CD8-positive, alpha-beta T cell (primary cell): ENCODE measurements at regions of chr20 and their contacts with region 1.

Region 1: DNA sequence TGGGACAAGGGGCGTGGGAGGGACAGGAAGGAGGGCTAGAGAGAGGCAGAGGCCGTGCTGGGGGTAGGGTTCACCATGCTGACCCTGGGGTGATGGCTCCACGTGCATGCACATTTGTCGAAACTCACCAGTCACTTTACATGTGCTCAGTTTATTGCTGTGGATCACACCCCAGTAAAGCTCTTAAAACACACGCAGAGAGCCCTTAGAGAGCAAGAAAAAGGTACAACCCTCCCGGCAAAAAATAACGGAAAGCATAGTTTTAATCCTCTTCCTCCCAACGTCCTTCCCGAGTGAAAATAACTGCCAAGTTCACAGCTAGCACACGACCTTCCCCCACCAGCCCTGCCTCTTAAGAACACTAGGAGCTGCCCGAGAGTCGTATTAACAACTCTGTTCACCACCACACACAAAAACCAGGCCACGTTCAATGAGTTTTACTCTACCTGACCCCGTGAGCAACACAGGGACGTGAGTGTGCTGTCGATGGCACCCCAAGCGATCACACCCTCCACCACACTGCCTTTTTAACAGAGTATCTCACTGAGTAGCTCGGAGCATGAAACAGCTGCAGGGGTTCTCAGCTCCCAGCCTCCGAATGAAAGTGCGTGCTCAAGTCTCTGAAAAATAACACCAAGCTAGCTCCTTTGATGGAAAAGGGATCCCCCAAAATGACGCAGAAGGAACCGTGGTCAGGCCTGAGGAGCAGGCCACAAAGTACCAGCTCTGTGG is 39.7 kb downstream of the TAF4 start:
- DNase-seq: peak in 7 of 9 experiments; percentile 4 to 64 (median 27)
- ATAC-seq: peak; percentile 85
- H3K4me3 ChIP-seq: no peak overlapping the region
- H3K4me3 Mint-ChIP-seq: peak overlapping the region; percentile 12
- H3K27ac ChIP-seq: no peak overlapping the region
- H3K27ac Mint-ChIP-seq: peak overlapping the region; percentile 58
- H3K4me1 ChIP-seq: peaks cover 20% of the 10 kb centered on the region
- H3K4me1 Mint-ChIP-seq: peaks cover 54% of the 10 kb centered on the region
- H3K27me3 ChIP-seq: no peaks in the 10 kb centered on the region
- H3K27me3 Mint-ChIP-seq: no peaks in the 10 kb centered on the region
- CTCF ChIP-seq: peak; percentile 48

Region 2: DNA sequence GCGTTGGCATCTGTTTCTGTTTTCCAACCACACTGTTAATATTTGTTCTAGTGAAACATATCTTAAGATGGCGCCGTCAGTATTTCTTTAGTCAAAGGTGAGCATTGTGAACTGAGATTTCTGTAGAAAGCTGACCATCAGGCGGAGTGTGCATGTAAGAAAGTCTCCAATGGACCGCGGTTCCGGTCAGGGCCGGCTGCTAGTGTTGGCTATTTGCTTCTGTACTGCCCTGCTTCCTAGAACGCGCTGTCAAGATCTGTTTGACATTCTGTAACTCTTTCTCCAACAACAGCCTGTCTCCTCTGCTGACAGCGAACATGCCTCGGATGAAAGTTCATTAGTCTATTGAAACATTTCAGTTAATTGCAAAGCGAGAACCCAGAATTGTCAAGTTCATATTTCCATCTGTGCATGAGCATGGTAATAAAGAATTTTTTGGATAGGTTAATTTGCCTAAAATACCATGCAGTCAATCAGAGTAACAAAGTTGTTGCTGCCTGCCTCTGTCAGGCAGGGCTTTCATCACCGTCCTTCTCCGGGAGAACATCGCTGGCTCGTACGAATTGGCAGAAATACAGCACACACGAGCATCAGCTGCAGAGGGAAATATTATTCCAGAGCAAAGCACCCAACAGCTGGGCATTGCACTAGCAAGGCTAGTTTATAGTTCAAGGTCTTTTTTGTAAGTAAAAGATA is 404.8 kb before region 1 on chr20:
- CTCF ChIA-PET with region 1: no interaction called
- POLR2A ChIA-PET with region 1: no interaction called
- intact Hi-C with region 1: no loop called
- DNase-seq: no peak
- ATAC-seq: no peak
- H3K4me3 ChIP-seq: no peak overlapping the region
- H3K4me3 Mint-ChIP-seq: no peak overlapping the region
- H3K27ac ChIP-seq: no peak overlapping the region
- H3K27ac Mint-ChIP-seq: no peak overlapping the region
- H3K4me1 ChIP-seq: no peaks in the 10 kb centered on the region
- H3K4me1 Mint-ChIP-seq: no peaks in the 10 kb centered on the region
- H3K27me3 ChIP-seq: no peaks in the 10 kb centered on the region
- H3K27me3 Mint-ChIP-seq: no peaks in the 10 kb centered on the region
- CTCF ChIP-seq: no peak

Region 3: GRCh38 chr20:62065669-62066338 is 39.8 kb after region 1 on chr20 and contains the start of gene TAF4:
- CTCF ChIA-PET with region 1: interaction called, 4 read pairs
- POLR2A ChIA-PET with region 1: interaction called, 5 read pairs
- intact Hi-C with region 1: loop called (anchors 5 kb)
- DNase-seq: peak; percentile 69 to 92 (median 79)
- ATAC-seq: peak; percentile 77
- H3K4me3 ChIP-seq: peak within 1 kb of the TSS; percentile 54 to 70
- H3K4me3 Mint-ChIP-seq: peak within 1 kb of the TSS; percentile 90
- H3K27ac ChIP-seq: peak within 1 kb of the TSS; percentile 47 to 74
- H3K27ac Mint-ChIP-seq: peak within 1 kb of the TSS; percentile 95
- H3K4me1 ChIP-seq: peaks cover 42% of the 10 kb centered on the region
- H3K4me1 Mint-ChIP-seq: peaks cover 52% of the 10 kb centered on the region
- H3K27me3 ChIP-seq: no peaks in the 10 kb centered on the region
- H3K27me3 Mint-ChIP-seq: no peaks in the 10 kb centered on the region
- CTCF ChIP-seq: no peak
- total RNA-seq, gene TAF4: 9.8 to 14.1 TPM

Region 4: DNA sequence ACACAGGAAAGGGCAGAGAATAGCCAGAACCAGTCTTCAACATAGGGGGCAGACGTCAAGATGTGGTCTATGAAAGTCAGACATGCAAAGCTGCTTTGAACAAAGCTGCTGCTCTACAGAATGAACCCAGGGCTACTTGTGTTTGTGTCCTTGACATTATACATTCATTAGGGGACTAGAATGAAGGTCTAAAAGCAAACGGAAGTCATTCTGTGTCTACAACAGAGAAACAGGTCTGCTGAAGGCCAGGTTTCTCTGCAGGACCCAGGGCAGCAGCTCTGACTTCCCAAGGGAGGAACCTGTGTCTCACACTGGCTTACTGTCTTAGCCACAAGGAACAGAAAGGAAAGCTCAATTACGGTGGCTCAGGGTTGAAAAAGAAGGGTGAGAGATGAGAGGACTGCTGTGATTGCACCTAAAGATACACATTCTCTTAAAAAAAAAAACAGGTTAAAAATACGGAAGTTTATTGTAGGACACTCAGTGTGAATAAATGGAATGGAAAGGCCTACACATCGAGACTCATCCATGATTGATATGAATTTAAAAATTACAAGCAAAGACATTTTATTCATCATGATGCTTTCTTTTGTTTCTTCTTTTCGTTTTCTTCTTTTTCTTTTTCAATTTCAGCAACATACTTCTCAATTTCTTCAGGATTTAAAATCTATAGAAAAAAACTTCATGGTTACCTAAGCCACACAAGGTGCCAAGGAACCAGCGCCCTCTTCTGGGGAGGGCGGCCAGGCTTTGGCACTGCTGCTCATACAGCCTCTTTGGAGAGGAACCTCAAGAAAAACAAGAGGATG is 110.5 kb after region 1 on chr20:
- CTCF ChIA-PET with region 1: interaction called, 21 read pairs
- POLR2A ChIA-PET with region 1: no interaction called
- intact Hi-C with region 1: loop called (anchors 1 kb)
- DNase-seq: peak; percentile 59 to 86 (median 78)
- ATAC-seq: peak; percentile 61
- H3K4me3 ChIP-seq: no peak overlapping the region
- H3K4me3 Mint-ChIP-seq: no peak overlapping the region
- H3K27ac ChIP-seq: no peak overlapping the region
- H3K27ac Mint-ChIP-seq: peak overlapping the region; percentile 90
- H3K4me1 ChIP-seq: peaks cover 21% of the 10 kb centered on the region
- H3K4me1 Mint-ChIP-seq: peaks cover 42% of the 10 kb centered on the region
- H3K27me3 ChIP-seq: no peaks in the 10 kb centered on the region
- H3K27me3 Mint-ChIP-seq: no peaks in the 10 kb centered on the region
- CTCF ChIP-seq: peak; percentile 80

Region 5: DNA sequence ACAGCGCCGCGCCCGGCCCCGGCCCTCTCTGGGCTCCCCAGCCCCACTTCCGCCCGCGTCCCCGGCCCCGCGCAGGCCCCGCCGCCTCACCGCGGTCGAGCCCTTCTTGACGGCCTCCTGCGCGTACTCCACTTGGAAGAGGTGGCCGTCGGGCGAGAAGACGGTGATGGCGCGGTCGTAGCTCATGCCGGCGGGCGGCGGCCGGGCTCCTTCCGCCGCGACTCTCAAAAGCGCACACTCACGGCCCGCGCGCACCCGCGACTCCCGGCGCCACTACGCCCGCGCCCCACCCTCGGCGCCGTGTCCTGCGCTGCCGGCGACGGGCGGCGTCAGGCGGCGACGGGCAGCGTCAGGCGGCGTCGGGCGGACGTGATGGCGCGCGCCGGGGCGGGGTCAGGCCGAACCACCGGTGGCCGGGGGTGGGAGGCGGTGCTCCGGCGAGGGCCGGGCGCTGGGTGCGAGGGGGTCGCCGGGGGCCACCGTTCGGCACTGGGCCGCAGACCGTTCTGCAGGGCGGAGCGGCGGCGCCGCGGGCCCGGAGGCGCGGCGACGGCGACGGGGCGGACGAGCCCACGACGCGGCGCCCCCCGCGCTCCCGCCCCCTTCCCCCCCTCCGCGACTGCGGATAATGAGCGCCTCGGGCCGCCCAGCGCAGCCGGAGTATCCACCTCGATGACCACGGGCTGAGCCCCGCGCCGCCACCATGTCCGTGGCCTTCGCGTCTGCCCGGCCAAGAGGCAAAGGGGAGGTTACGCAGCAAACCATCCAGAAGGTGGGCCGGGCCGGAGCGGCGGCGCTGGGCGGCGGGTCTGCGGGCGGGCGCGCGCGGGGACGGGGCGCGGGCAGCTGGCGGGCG is 117.3 kb after region 1 on chr20 and contains the starts of genes PSMA7 and SS18L1:
- CTCF ChIA-PET with region 1: interaction called, 13 read pairs
- POLR2A ChIA-PET with region 1: interaction called, 4 read pairs
- intact Hi-C with region 1: loop called in 1 of 2 experiments (anchors 2 kb)
- DNase-seq: peak; percentile 65 to 95 (median 85)
- ATAC-seq: peak; percentile 83
- H3K4me3 ChIP-seq: peak within 1 kb of the TSS; percentile 59 to 60
- H3K4me3 Mint-ChIP-seq: peak within 1 kb of the TSS; percentile 92
- H3K27ac ChIP-seq: peak within 1 kb of the TSS; percentile 58 to 83
- H3K27ac Mint-ChIP-seq: peak within 1 kb of the TSS; percentile 93
- H3K4me1 ChIP-seq: peaks cover 37% of the 10 kb centered on the region
- H3K4me1 Mint-ChIP-seq: peaks cover 50% of the 10 kb centered on the region
- H3K27me3 ChIP-seq: no peaks in the 10 kb centered on the region
- H3K27me3 Mint-ChIP-seq: no peaks in the 10 kb centered on the region
- CTCF ChIP-seq: no peak
- total RNA-seq, gene PSMA7: 170 to 179 TPM
- total RNA-seq, gene SS18L1: 12.6 to 12.9 TPM

Region 6: GRCh38 chr20:62156592-62157386 is 130.8 kb after region 1 on chr20:
- CTCF ChIA-PET with region 1: interaction called, 5 read pairs
- POLR2A ChIA-PET with region 1: no interaction called
- intact Hi-C with region 1: loop called in 1 of 2 experiments (anchors 1 kb)
- DNase-seq: peak; percentile 53 to 79 (median 77)
- ATAC-seq: peak; percentile 96
- H3K4me3 ChIP-seq: no peak overlapping the region
- H3K4me3 Mint-ChIP-seq: no peak overlapping the region
- H3K27ac ChIP-seq: no peak overlapping the region
- H3K27ac Mint-ChIP-seq: no peak overlapping the region
- H3K4me1 ChIP-seq: peaks cover 9% of the 10 kb centered on the region
- H3K4me1 Mint-ChIP-seq: peaks cover 10% of the 10 kb centered on the region
- H3K27me3 ChIP-seq: no peaks in the 10 kb centered on the region
- H3K27me3 Mint-ChIP-seq: no peaks in the 10 kb centered on the region
- CTCF ChIP-seq: peak; percentile 59

Region 7: GRCh38 chr20:62808211-62808865 is 782.3 kb after region 1 on chr20:
- CTCF ChIA-PET with region 1: no interaction called
- POLR2A ChIA-PET with region 1: no interaction called
- intact Hi-C with region 1: no loop called
- DNase-seq: peak; percentile 58 to 87 (median 78)
- ATAC-seq: peak; percentile 49
- H3K4me3 ChIP-seq: no peak overlapping the region
- H3K4me3 Mint-ChIP-seq: peak overlapping the region; percentile 50
- H3K27ac ChIP-seq: no peak overlapping the region
- H3K27ac Mint-ChIP-seq: peak overlapping the region; percentile 60
- H3K4me1 ChIP-seq: peaks cover 37% of the 10 kb centered on the region
- H3K4me1 Mint-ChIP-seq: peaks cover 29% of the 10 kb centered on the region
- H3K27me3 ChIP-seq: no peaks in the 10 kb centered on the region
- H3K27me3 Mint-ChIP-seq: no peaks in the 10 kb centered on the region
- CTCF ChIP-seq: peak; percentile 95